Activated B cell treated with CpG ODN at 0.5 μM for 24 hours (primary cell): ENCODE measurements at regions of chr22 and their contacts with region 1.

Region 1: GRCh38 chr22:39763276-39763675 is 130.3 kb downstream of the ENTHD1 start:
- DNase-seq: no peak
- ATAC-seq: no peak
- H3K4me3 Mint-ChIP-seq: no peak overlapping the region
- H3K27ac Mint-ChIP-seq: no peak overlapping the region
- H3K4me1 Mint-ChIP-seq: peaks cover 11% of the 10 kb centered on the region
- H3K27me3 Mint-ChIP-seq: no peaks in the 10 kb centered on the region
- CTCF ChIP-seq: no peak

Region 2: GRCh38 chr22:39814899-39815298 is 51.6 kb after region 1 on chr22:
- CTCF ChIA-PET with region 1: no interaction called
- POLR2A ChIA-PET with region 1: no interaction called
- intact Hi-C with region 1: loop called (anchors 5 kb)
- DNase-seq: no peak
- ATAC-seq: no peak
- H3K4me3 Mint-ChIP-seq: no peak overlapping the region
- H3K27ac Mint-ChIP-seq: no peak overlapping the region
- H3K4me1 Mint-ChIP-seq: peaks cover 12% of the 10 kb centered on the region
- H3K27me3 Mint-ChIP-seq: peaks cover 4% of the 10 kb centered on the region
- CTCF ChIP-seq: no peak